BJ (cell line): ENCODE measurements at regions of chr14 and their contacts with region 1.

Region 1: DNA sequence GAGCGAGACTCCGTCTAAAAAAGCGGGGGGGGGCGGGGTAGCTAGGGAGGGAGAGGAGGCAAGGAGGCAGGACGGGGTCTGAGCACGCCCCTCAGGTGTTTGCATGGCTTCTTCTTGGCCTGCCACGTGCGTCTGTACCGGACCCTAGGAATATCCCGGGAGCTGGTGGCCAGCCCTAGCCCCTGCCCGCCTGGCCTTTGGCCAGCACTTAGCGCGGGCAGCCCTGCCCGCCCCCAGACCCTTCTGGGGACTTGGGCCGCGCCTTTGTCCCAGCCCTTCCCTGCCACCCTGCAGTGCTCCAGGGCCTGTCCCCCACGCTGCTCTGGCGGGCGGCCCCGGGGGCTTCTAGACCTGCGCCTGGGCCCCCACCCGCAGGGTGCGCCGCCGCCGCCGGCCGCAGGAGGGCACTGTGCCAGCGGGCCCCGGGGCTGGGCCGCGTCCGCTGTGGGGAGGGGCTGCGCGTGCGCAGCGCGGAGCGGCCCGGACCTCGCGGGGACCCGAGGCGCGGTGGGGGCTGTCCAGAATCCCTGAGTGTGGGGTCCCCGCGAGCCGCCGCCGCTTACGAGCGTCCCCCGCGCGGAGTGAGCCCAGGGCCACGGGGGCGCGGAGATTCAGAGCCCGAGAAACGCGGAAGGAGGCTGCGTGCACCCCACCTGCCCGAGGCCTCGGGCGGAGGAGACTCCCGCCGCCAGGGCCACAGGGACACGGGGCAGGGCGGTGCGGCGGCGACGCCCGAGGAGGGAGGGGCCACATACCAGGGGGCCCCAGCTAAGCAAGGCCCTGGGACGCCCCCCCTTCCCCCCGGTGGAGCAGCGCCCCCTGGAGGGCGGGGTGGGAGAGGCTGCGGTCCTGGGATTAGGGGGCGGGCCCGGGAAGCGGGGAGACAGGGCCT is 21.0 kb downstream of the SLC25A29 start:
- DNase-seq: no peak
- H3K4me3 ChIP-seq: peak overlapping the region; percentile 79
- H3K27me3 ChIP-seq: no peaks in the 10 kb centered on the region
- CTCF ChIP-seq: peak; percentile 92

Region 2: DNA sequence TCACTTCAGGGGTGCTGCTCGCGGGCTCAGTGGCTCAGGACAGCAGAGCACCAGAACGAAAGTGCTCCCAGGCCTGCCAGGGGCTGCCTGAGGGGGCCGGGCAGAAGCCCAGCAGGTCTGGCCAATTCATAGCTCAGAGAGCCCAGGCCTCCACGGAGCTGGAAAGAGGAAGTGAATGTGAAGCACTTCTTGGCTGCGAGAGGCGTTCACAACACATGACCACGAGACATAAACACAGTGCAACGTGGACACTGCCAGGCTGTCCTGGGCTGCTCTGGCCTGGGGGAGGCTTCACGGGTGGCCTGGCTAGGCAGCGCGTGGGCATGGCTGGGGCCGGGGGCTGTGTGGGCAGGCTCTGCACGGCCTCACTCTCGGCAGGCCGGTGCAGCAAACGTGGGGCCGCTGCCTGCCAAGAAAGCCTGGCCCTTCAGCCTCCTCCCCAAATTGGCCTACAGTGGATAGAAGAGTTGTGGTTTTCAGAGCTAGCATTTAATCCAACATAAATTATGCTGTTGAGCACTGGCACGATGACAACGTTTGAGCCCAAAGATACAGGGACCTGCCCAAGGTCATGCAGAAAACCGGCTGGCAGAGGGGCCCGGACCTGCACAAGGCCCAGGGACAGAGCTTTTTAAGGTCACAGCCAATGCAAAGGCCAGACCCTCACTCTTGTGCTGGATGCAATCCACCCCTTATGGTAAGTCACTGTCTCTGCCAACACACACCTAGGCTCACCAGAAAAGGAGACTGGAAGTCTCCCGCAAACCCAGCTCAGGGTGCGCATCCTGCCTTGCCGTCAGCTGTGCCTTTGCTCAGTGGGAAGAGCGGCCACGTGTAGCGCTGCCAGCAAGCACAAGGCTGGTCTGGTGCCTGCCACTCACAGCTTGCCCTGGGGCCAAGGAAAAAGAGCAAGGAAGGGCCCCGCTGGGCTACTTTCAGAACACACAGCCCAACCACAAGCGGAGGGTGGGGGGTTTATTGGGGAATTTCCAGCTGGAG is 12.3 kb after region 1 on chr14:
- CTCF ChIA-PET with region 1: interaction called, 58 read pairs
- POLR2A ChIA-PET with region 1: no interaction called
- DNase-seq: no peak
- H3K4me3 ChIP-seq: no peak overlapping the region
- H3K27me3 ChIP-seq: no peaks in the 10 kb centered on the region
- CTCF ChIP-seq: no peak

Region 3: GRCh38 chr14:100305324-100306100 is 20.2 kb after region 1 on chr14:
- CTCF ChIA-PET with region 1: interaction called, 58 read pairs
- POLR2A ChIA-PET with region 1: no interaction called
- DNase-seq: no peak
- H3K4me3 ChIP-seq: peak overlapping the region; percentile 70
- H3K27me3 ChIP-seq: no peaks in the 10 kb centered on the region
- CTCF ChIP-seq: no peak

Region 4: DNA sequence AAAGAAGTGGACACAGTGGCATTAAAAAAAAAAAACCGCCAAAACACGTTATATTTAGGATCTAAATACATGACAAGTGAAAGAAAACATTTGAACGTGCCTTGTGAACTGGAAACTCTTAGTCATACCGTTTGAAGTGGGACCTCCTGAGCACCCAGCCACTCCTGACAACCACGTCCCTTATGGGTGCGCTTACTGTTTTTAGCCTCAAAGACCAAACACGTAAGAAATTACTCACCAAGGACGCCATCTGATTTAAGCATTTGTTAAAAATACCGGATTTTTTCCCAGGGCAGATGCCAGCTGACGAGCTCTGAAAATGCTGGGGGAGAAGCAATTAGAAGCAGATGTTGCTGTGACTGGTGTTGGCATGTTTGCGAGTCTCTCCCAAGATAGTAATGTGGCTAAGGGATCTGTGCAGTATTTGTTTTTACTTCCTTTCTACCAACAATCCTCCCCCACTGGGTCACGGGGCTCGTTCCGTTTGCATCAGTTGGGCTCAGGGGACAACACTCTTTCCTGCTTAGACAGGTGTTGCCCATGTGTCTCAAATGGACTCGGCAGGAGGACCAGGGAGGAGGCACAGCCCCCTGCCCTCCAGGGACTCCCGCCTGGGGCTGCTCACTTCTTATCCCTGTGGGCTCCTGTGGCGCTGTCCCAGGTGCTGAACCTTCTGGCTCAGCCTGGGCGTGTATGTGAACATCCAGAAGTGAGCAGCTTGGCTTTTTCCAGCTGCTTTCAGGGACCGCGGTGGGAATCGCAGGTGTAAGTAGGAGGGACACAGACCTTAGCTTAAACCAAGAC is 201.0 kb after region 1 on chr14:
- CTCF ChIA-PET with region 1: no interaction called
- POLR2A ChIA-PET with region 1: no interaction called
- DNase-seq: peak; percentile 89
- H3K4me3 ChIP-seq: no peak overlapping the region
- H3K27me3 ChIP-seq: no peaks in the 10 kb centered on the region
- CTCF ChIP-seq: no peak